AG04450 (cell line): ENCODE measurements at regions of chr17 and their contacts with region 1.

Region 1: GRCh38 chr17:1908699-1909309 is 79.0 kb downstream of the RPA1 start:
- DNase-seq: peak; percentile 48
- H3K4me3 ChIP-seq: peak overlapping the region; percentile 32
- H3K27ac ChIP-seq: no peak overlapping the region
- H3K27me3 ChIP-seq: peaks cover 64% of the 10 kb centered on the region
- CTCF ChIP-seq: peak; percentile 85

Region 2: DNA sequence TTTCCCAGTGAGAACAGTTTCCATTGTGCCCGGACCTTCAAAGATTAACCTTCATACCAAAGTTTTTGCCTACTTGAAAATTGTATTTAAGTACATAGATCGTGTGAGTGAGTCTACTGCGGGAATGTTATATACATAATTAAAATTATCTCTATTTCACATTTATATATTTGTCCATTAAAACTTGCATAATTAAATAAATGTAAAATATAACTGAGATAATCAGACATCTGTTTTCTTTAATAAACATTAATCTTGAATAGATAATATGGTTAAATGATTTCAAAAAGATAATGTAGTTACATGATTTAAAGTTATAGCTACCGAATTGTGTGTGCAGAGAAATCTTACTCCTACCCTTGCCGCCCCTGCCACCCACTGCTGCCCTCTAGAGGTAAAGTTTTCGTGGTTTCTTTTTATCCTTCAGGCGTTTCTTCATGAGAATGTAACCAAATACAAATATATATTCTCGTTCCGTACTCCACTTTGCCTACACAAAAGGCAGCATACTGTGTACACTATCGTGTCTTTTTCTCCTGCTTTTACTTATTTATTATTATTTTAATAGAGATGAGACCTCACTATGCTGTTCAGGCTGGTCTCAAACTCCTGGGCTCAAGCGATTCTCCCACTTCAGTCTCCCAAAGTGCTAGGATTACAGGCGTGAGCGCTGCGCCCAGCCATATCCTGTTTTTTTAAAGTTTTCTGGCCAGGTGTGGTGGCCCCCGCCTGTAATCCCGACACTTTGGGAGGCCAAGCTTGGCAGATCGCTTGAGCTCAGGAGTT is 43.4 kb before region 1 on chr17:
- CTCF ChIA-PET with region 1: no interaction called
- POLR2A ChIA-PET with region 1: no interaction called
- DNase-seq: no peak
- H3K4me3 ChIP-seq: no peak overlapping the region
- H3K27ac ChIP-seq: no peak overlapping the region
- H3K27me3 ChIP-seq: no peaks in the 10 kb centered on the region
- CTCF ChIP-seq: peak; percentile 59

Region 3: GRCh38 chr17:1931759-1932579 is 23.2 kb after region 1 on chr17:
- CTCF ChIA-PET with region 1: no interaction called
- POLR2A ChIA-PET with region 1: no interaction called
- DNase-seq: no peak
- H3K4me3 ChIP-seq: no peak overlapping the region
- H3K27ac ChIP-seq: no peak overlapping the region
- H3K27me3 ChIP-seq: peaks cover 46% of the 10 kb centered on the region
- CTCF ChIP-seq: no peak

Region 4: GRCh38 chr17:2029911-2030778 is 121.3 kb after region 1 on chr17 and contains the start of gene DPH1:
- CTCF ChIA-PET with region 1: interaction called, 69 read pairs
- POLR2A ChIA-PET with region 1: interaction called, 9 read pairs
- DNase-seq: peak; percentile 62
- H3K4me3 ChIP-seq: peak within 1 kb of the TSS; percentile 96
- H3K27ac ChIP-seq: peak within 1 kb of the TSS; percentile 49
- H3K27me3 ChIP-seq: peaks cover 15% of the 10 kb centered on the region
- CTCF ChIP-seq: no peak
- polyA plus RNA-seq, gene DPH1: 25.3 and 29.9 TPM in 2 replicates